ENCODE measurements at regions of chr7 and their contacts with region 1.

Region 1: GRCh38 chr7:80699721-80700256 is 61.3 kb downstream of the CD36 start:
- DNase-seq: no peak
- H3K4me3 ChIP-seq: no peak overlapping the region
- H3K27ac ChIP-seq: no peak overlapping the region
- H3K4me1 ChIP-seq: no peaks in the 10 kb centered on the region
- H3K27me3 ChIP-seq: no peaks in the 10 kb centered on the region
- CTCF ChIP-seq: no peak
- POLR2A ChIP-seq: no peak

Region 2: GRCh38 chr7:80654887-80655340 is 44.9 kb before region 1 on chr7:
- intact Hi-C with region 1: no loop called
- DNase-seq: peak; percentile 4 to 18
- H3K4me3 ChIP-seq: no peak overlapping the region
- H3K27ac ChIP-seq: no peak overlapping the region
- H3K4me1 ChIP-seq: peaks cover 7% of the 10 kb centered on the region in 2 donors
- H3K27me3 ChIP-seq: no peaks in the 10 kb centered on the region
- CTCF ChIP-seq: no peak
- POLR2A ChIP-seq: no peak

Region 3: DNA sequence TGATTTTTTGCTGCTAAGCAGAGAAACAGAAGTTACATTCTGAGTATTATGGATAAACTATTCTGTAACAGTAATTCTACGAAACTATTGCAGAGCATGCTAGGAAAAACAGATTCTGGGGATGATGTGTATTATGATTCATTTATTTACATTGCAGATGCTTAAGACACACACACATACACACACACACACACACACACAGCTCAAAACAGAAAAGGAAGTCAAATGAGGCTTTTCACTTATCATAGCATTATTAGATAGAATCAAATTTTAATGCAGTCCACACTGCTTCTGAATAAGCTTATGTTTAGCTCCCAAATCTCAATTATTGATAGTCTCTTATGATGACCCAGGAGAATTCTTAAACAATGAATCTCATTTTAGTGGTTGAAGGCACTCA is 762.9 kb after region 1 on chr7:
- intact Hi-C with region 1: loop called (anchors 5 kb)
- DNase-seq: no peak
- H3K4me3 ChIP-seq: no peak overlapping the region
- H3K27ac ChIP-seq: no peak overlapping the region
- H3K4me1 ChIP-seq: no peaks in the 10 kb centered on the region
- H3K27me3 ChIP-seq: no peaks in the 10 kb centered on the region
- CTCF ChIP-seq: no peak
- POLR2A ChIP-seq: no peak

Measured in thyroid gland (tissue), 4 donors.